ENCODE measurements at regions of chr3 and their contacts with region 1.

Region 1: GRCh38 chr3:176663837-176664831 is 533.1 kb downstream of the TBL1XR1 start:
- DNase-seq: peak in 1 of 2 experiments; percentile 9
- H3K4me3 ChIP-seq: no peak overlapping the region
- H3K4me3 Mint-ChIP-seq: no peak overlapping the region
- H3K27ac Mint-ChIP-seq: no peak overlapping the region
- H3K4me1 ChIP-seq: no peaks in the 10 kb centered on the region
- H3K4me1 Mint-ChIP-seq: no peaks in the 10 kb centered on the region
- H3K27me3 ChIP-seq: no peaks in the 10 kb centered on the region
- H3K27me3 Mint-ChIP-seq: no peaks in the 10 kb centered on the region
- CTCF ChIP-seq: peak; percentile 24 to 32

Region 2: GRCh38 chr3:176514297-176514696 is 149.8 kb before region 1 on chr3:
- CTCF ChIA-PET with region 1: no interaction called
- POLR2A ChIA-PET with region 1: no interaction called
- intact Hi-C with region 1: loop called (anchors 10 kb)
- DNase-seq: peak in 1 of 2 experiments; percentile 37
- H3K4me3 ChIP-seq: no peak overlapping the region
- H3K4me3 Mint-ChIP-seq: no peak overlapping the region
- H3K27ac Mint-ChIP-seq: no peak overlapping the region
- H3K4me1 ChIP-seq: no peaks in the 10 kb centered on the region
- H3K4me1 Mint-ChIP-seq: no peaks in the 10 kb centered on the region
- H3K27me3 ChIP-seq: no peaks in the 10 kb centered on the region
- H3K27me3 Mint-ChIP-seq: no peaks in the 10 kb centered on the region
- CTCF ChIP-seq: peak; percentile 27 to 44

Region 3: DNA sequence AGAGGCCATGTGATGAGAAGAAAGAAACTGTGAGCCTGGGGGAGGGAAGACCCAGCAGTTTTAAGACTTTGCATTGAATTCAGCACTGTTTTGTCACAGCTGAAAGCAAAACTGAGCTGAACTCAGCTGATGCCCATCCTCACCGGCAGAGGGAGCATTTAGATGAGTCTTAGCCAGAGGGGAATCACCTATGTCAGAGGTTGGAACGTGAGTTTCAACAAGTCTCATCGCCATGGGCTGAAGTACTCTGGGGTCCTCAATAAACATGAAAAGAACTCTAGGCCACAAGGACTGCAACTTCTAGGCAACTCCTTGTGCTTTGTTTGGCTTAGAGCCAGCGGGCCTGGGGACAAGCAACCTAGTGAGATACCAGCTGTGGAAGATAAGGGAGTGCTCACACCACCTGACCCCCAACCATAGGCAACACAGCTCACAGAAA is 208.7 kb after region 1 on chr3:
- CTCF ChIA-PET with region 1: no interaction called
- POLR2A ChIA-PET with region 1: no interaction called
- intact Hi-C with region 1: no loop called
- DNase-seq: peak; percentile 57 to 58
- H3K4me3 ChIP-seq: no peak overlapping the region
- H3K4me3 Mint-ChIP-seq: no peak overlapping the region
- H3K27ac Mint-ChIP-seq: no peak overlapping the region
- H3K4me1 ChIP-seq: no peaks in the 10 kb centered on the region
- H3K4me1 Mint-ChIP-seq: no peaks in the 10 kb centered on the region
- H3K27me3 ChIP-seq: no peaks in the 10 kb centered on the region
- H3K27me3 Mint-ChIP-seq: no peaks in the 10 kb centered on the region
- CTCF ChIP-seq: peak; percentile 71 to 73

Measured in Caco-2 (cell line).